Endothelial cell of umbilical vein (primary cell): ENCODE measurements at regions of chr1 and their contacts with region 1.

Region 1: DNA sequence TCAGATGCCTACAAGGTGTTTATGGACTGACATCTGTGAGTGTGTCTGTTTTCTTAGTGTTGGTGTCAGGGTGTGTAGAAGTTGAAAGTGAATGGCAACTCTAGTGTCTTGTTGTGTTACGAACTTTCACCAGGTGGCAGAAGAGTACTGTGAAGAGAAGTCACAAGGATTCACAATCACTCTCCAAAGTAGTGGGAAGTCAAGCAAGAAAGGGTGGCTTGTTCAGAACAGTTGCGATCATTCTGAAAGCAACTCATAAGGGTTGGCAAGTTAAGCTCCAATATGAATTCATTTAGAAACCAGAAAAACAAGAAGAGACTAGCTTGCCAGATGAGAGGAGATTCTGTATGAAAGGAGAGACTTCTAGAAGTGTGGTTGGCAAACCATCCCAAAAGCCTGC is 86.1 kb downstream of the FASLG start:
- DNase-seq: peak; percentile 82
- H3K4me3 ChIP-seq: no peak overlapping the region
- H3K27ac ChIP-seq: peak overlapping the region; percentile 86
- H3K4me1 ChIP-seq: peaks cover 21% of the 10 kb centered on the region
- H3K27me3 ChIP-seq: no peaks in the 10 kb centered on the region
- CTCF ChIP-seq: peak; percentile 64 to 66
- POLR2A ChIP-seq: no peak

Region 2: GRCh38 chr1:172863031-172863430 is 118.0 kb after region 1 on chr1:
- CTCF ChIA-PET with region 1: no interaction called
- POLR2A ChIA-PET with region 1: no interaction called
- dilution Hi-C with region 1: no loop called
- intact Hi-C with region 1: loop called (anchors 1 kb)
- DNase-seq: no peak
- H3K4me3 ChIP-seq: no peak overlapping the region
- H3K27ac ChIP-seq: no peak overlapping the region
- H3K4me1 ChIP-seq: peaks cover 17% of the 10 kb centered on the region
- H3K27me3 ChIP-seq: no peaks in the 10 kb centered on the region
- CTCF ChIP-seq: no peak
- POLR2A ChIP-seq: no peak

Region 3: GRCh38 chr1:173043253-173043652 is 298.2 kb after region 1 on chr1:
- CTCF ChIA-PET with region 1: no interaction called
- POLR2A ChIA-PET with region 1: no interaction called
- dilution Hi-C with region 1: no loop called
- intact Hi-C with region 1: loop called (anchors 2 kb)
- DNase-seq: peak; percentile 80
- H3K4me3 ChIP-seq: peak overlapping the region in 1 of 3 experiments; percentile 7
- H3K27ac ChIP-seq: peak overlapping the region; percentile 83
- H3K4me1 ChIP-seq: peaks cover 35% of the 10 kb centered on the region
- H3K27me3 ChIP-seq: no peaks in the 10 kb centered on the region
- CTCF ChIP-seq: no peak
- POLR2A ChIP-seq: no peak

Region 4: DNA sequence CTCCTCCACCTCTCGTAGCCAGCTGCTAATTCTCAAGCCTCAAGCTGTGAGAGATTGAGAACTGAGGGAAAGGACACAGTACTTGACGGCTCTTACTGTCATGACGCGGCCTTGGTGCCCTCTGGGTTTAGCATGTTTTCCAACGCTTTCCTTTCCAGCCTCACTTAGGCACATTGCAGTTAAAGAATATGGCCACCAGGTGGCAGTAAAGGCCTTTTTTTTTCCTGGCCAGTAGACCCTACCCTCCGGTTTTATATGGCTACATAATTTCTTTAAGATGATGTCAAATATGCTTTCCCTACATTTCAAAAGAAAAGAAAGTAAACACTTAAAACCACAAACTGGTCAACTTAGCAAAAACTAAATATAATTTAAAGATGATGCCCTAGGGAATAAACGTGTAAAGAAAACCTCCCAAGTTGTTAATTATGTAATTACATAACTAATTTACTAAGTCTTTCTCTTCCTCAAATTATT is 675.4 kb after region 1 on chr1:
- CTCF ChIA-PET with region 1: interaction called, 44 read pairs
- POLR2A ChIA-PET with region 1: no interaction called
- dilution Hi-C with region 1: no loop called
- intact Hi-C with region 1: loop called (anchors 1 kb)
- DNase-seq: peak; percentile 83
- H3K4me3 ChIP-seq: no peak overlapping the region
- H3K27ac ChIP-seq: no peak overlapping the region
- H3K4me1 ChIP-seq: peaks cover 5% of the 10 kb centered on the region
- H3K27me3 ChIP-seq: no peaks in the 10 kb centered on the region
- CTCF ChIP-seq: peak; percentile 63 to 76
- POLR2A ChIP-seq: no peak

Region 5: DNA sequence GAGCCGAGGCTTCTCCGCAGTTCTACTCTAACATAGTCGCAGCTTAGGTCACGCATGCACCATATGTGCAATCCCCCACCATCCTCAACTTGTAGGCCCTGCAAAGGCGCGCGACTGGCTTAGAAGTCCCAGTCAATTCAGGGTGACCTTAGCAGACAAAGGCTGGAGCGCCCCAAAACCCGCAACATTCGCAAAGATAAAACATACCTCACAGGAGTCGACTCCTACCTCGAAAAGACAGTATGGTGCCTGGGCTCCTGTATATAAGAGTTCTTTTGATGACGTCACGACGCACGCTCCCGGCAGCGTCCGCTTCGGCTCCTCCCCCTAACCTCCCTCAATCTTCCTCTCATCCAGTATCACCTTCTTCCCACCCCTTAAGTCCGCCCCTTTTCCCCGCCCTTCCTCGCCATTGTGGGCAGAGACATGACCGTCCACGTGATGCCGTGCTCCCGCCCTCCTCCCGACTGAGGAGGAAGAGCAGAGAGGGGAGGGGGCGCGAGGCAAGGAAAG is 1122.8 kb after region 1 on chr1 and contains the start of gene GAS5:
- CTCF ChIA-PET with region 1: interaction called, 5 read pairs
- POLR2A ChIA-PET with region 1: no interaction called
- dilution Hi-C with region 1: no loop called
- intact Hi-C with region 1: loop called (anchors 5 kb)
- DNase-seq: peak; percentile 99
- H3K4me3 ChIP-seq: peak within 1 kb of the TSS; percentile 36 to 99 (median 90)
- H3K27ac ChIP-seq: peak within 1 kb of the TSS; percentile 64
- H3K4me1 ChIP-seq: peaks cover 48% of the 10 kb centered on the region
- H3K27me3 ChIP-seq: no peaks in the 10 kb centered on the region
- CTCF ChIP-seq: no peak
- POLR2A ChIP-seq: peak; percentile 100
- total RNA-seq, gene GAS5: 302 and 343 TPM in 2 replicates

Region 6: GRCh38 chr1:174726167-174726879 is 1981.3 kb after region 1 on chr1:
- CTCF ChIA-PET with region 1: interaction called, 17 read pairs
- POLR2A ChIA-PET with region 1: no interaction called
- dilution Hi-C with region 1: no loop called
- intact Hi-C with region 1: no loop called
- DNase-seq: peak; percentile 25
- H3K4me3 ChIP-seq: no peak overlapping the region
- H3K27ac ChIP-seq: no peak overlapping the region
- H3K4me1 ChIP-seq: no peaks in the 10 kb centered on the region
- H3K27me3 ChIP-seq: no peaks in the 10 kb centered on the region
- CTCF ChIP-seq: peak in 1 of 2 donors; percentile 19
- POLR2A ChIP-seq: no peak